K562 (cell line): ENCODE measurements at regions of chr5 and their contacts with region 1.

Region 1: GRCh38 chr5:90932052-90932699 is 373.6 kb downstream of the ADGRV1 start:
- DNase-seq: peak; percentile 49 to 67 (median 56)
- ATAC-seq: peak; percentile 86
- H3K4me3 ChIP-seq: no peak overlapping the region
- H3K27ac ChIP-seq: no peak overlapping the region
- H3K4me1 ChIP-seq: peaks cover 0 to 12% of the 10 kb centered on the region in 2 experiments; a peak in 2 of 5 replicates
- H3K27me3 ChIP-seq: no peaks in the 10 kb centered on the region
- CTCF ChIP-seq: peak; percentile 60 to 82 (median 81); a peak in 5 of 6 replicates
- EP300 ChIP-seq: no peak
- POLR2A ChIP-seq: no peak
- RAD21 ChIP-seq: peak; percentile 74 to 78

Region 2: DNA sequence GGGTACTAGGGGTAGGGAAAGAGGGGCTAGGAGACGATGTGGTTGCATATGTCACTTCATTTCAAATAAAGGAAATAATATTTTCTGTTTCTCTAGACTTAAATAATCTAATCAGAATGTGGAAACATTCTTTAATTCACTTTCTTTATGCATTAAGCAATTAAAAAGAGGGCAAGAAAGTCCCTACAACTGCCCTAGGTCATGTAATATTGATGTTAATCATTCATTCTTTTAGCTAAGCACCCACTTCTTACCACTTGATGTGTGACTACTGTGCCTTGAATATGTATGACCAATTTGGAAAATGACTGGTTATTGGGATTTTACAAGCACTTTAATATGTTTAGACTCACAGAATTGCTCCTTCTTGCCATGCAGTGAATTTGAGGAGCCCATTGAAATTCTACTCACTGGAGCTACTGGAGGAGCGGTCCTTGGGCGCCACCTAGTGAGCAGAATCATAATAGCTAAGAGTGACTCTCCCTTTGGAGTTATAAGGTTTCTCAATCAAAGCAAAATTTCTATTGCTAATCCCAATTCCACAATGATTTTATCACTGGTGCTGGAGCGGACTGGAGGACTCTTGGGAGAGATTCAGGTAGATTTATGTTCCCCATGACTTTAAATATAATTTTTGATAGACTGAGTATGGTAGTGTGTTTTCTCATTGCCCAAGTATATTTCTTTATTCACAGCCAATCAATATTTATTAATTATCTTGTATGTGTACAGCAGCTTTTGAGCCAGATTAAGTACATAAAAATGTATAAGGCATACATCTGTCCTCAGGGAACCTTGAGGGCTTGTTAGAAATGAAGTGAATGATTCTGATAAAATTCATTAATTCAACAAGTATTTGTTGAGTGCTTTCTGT is 148.5 kb before region 1 on chr5:
- CTCF ChIA-PET with region 1: no interaction called
- POLR2A ChIA-PET with region 1: no interaction called
- in situ Hi-C with region 1: no loop called
- intact Hi-C with region 1: no loop called
- DNase-seq: peak; percentile 52 to 81 (median 60)
- ATAC-seq: peak; percentile 96
- H3K4me3 ChIP-seq: no peak overlapping the region
- H3K27ac ChIP-seq: no peak overlapping the region
- H3K4me1 ChIP-seq: no peaks in the 10 kb centered on the region
- H3K27me3 ChIP-seq: no peaks in the 10 kb centered on the region
- CTCF ChIP-seq: peak; percentile 73 to 95 (median 85)
- EP300 ChIP-seq: no peak
- POLR2A ChIP-seq: no peak
- RAD21 ChIP-seq: peak; percentile 77 to 84

Region 3: GRCh38 chr5:90866333-90866732 is 65.8 kb before region 1 on chr5:
- CTCF ChIA-PET with region 1: interaction called, 3 read pairs
- POLR2A ChIA-PET with region 1: no interaction called
- in situ Hi-C with region 1: no loop called
- intact Hi-C with region 1: loop called (anchors 2 kb)
- DNase-seq: peak; percentile 18 to 47 (median 31)
- ATAC-seq: peak; percentile 84
- H3K4me3 ChIP-seq: no peak overlapping the region
- H3K27ac ChIP-seq: no peak overlapping the region; the same call in 2 of the 3 replicates
- H3K4me1 ChIP-seq: no peaks in the 10 kb centered on the region
- H3K27me3 ChIP-seq: no peaks in the 10 kb centered on the region
- CTCF ChIP-seq: peak; percentile 30 to 73 (median 32); a peak in 3 of 6 replicates
- EP300 ChIP-seq: no peak
- POLR2A ChIP-seq: no peak
- RAD21 ChIP-seq: peak; percentile 68 to 75

Region 4: GRCh38 chr5:91101600-91102379 is 169.6 kb after region 1 on chr5:
- CTCF ChIA-PET with region 1: interaction called, 3 read pairs
- POLR2A ChIA-PET with region 1: no interaction called
- in situ Hi-C with region 1: no loop called
- intact Hi-C with region 1: loop called (anchors 1 kb)
- DNase-seq: peak; percentile 54 to 70 (median 63)
- ATAC-seq: peak; percentile 99
- H3K4me3 ChIP-seq: no peak overlapping the region
- H3K27ac ChIP-seq: no peak overlapping the region
- H3K4me1 ChIP-seq: no peaks in the 10 kb centered on the region
- H3K27me3 ChIP-seq: no peaks in the 10 kb centered on the region
- CTCF ChIP-seq: peak; percentile 65 to 86 (median 69)
- EP300 ChIP-seq: no peak
- POLR2A ChIP-seq: no peak
- RAD21 ChIP-seq: peak; percentile 79 to 93

Region 5: DNA sequence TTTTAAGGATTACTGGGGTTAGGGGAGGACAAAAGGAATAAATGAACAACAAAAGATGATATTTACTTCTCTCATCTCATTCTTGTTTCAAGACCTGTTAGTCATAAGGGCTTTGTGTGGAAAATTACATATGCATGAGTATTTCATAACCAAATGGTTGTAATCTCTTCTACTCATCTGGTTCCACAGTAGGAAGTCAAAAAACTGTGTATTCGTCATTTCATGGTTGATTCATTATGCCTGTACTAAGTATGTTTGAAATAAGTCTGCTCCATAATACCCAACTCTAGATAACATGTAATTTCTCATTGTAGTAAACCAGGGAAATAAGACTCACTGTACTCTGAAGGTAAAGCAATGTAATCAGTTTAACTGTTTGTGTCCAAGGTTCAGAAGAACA is 238.1 kb after region 1 on chr5:
- CTCF ChIA-PET with region 1: no interaction called
- POLR2A ChIA-PET with region 1: no interaction called
- in situ Hi-C with region 1: no loop called
- intact Hi-C with region 1: loop called (anchors 10 kb)
- DNase-seq: no peak
- ATAC-seq: no peak
- H3K4me3 ChIP-seq: no peak overlapping the region
- H3K27ac ChIP-seq: no peak overlapping the region
- H3K4me1 ChIP-seq: peaks cover 0 to 5% of the 10 kb centered on the region in 2 experiments; a peak in 2 of 5 replicates
- H3K27me3 ChIP-seq: no peaks in the 10 kb centered on the region
- CTCF ChIP-seq: no peak
- EP300 ChIP-seq: no peak
- POLR2A ChIP-seq: no peak
- RAD21 ChIP-seq: no peak

Region 6: GRCh38 chr5:91219803-91220371 is 287.7 kb after region 1 on chr5:
- CTCF ChIA-PET with region 1: no interaction called
- POLR2A ChIA-PET with region 1: no interaction called
- in situ Hi-C with region 1: no loop called
- intact Hi-C with region 1: loop called (anchors 5 kb)
- DNase-seq: peak in 3 of 4 experiments; percentile 29 to 42 (median 37)
- ATAC-seq: peak; percentile 85
- H3K4me3 ChIP-seq: no peak overlapping the region
- H3K27ac ChIP-seq: peak overlapping the region; percentile 50; the same call in 1 of the 3 replicates
- H3K4me1 ChIP-seq: peaks cover 0 to 14% of the 10 kb centered on the region in 2 experiments; a peak in 3 of 5 replicates
- H3K27me3 ChIP-seq: no peaks in the 10 kb centered on the region
- CTCF ChIP-seq: peak; percentile 48 to 57 (median 51); a peak in 5 of 6 replicates
- EP300 ChIP-seq: no peak
- POLR2A ChIP-seq: no peak
- RAD21 ChIP-seq: peak; percentile 24 to 44; a peak in 3 of 4 replicates